ENCODE measurements at regions of chr2 and their contacts with region 1.

Region 1: DNA sequence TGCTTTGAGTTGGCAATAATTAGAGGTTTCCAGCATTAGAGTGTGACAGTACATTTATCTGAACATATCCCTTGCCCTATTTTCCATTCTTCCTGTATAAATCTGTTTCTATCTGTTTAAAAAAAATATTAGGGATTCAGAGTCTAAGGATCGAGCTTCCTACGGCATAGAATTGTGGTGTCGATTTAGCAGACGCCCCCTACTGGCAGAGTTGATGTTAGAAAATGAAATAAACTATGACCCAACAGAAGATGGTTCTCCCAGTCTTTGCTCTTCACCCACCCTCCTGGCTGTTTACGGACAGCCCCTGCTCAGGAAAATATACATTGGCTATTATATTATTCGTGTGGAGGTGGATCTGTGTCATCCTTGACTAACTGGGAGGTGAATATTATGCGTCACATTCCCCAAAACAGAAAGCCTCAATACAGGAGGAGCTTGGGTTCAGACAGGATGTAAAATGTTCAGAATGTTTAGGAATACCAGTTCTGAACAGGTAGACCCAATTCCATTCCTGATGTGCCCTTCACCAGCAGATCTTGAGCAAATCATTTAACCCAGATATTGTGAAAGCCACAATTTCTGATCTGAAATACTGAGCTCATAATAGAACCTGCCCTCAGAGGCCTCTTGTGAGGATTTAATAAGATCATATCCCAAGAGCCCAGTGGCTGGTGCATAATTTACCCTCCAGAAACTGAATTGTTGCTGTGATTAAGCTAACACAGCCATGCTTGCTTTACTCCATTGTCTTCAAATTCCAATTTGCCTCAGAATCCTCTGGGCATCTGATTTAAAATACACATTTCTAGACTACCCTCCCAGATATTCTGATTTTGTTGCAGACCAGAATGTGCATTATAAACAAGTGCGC is 10.8 kb upstream of the ERMN start:
- DNase-seq: peak; percentile 60
- ATAC-seq: no peak
- H3K4me3 Mint-ChIP-seq: peak overlapping the region; percentile 37
- H3K27ac Mint-ChIP-seq: no peak overlapping the region
- H3K4me1 Mint-ChIP-seq: peaks cover 70% of the 10 kb centered on the region
- H3K27me3 Mint-ChIP-seq: no peaks in the 10 kb centered on the region

Region 2: GRCh38 chr2:157320409-157320808 is 16.0 kb before region 1 on chr2:
- CTCF ChIA-PET with region 1: interaction called, 91 read pairs
- POLR2A ChIA-PET with region 1: no interaction called
- intact Hi-C with region 1: no loop called
- DNase-seq: no peak
- ATAC-seq: no peak
- H3K4me3 Mint-ChIP-seq: no peak overlapping the region
- H3K27ac Mint-ChIP-seq: no peak overlapping the region
- H3K4me1 Mint-ChIP-seq: peaks cover 21% of the 10 kb centered on the region
- H3K27me3 Mint-ChIP-seq: no peaks in the 10 kb centered on the region

Region 3: DNA sequence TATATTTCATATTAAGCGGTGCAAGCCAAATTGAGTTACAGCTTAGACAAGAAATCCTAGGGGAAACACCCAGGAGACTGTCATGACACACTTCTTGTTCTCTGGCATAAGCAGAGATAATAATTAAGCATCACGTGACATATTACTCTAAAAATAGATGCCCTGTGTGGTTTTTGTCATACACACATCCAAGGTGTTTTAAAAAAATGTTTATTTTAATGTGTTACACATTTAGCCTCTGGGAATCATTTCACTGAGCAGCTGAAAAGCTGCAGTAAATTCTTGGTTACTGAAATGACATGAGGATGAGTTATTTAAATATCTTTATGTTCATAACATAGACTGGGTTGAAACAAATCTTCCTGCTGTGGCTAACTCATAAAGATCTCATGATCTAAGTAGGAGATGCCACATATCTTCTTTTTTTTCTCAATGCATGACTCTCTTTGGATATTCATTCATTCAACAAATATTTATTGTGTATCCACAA is 27.3 kb after region 1 on chr2:
- CTCF ChIA-PET with region 1: interaction called, 12 read pairs
- POLR2A ChIA-PET with region 1: no interaction called
- intact Hi-C with region 1: no loop called
- DNase-seq: no peak
- ATAC-seq: peak; percentile 77
- H3K4me3 Mint-ChIP-seq: no peak overlapping the region
- H3K27ac Mint-ChIP-seq: peak overlapping the region; percentile 5
- H3K4me1 Mint-ChIP-seq: peaks cover 32% of the 10 kb centered on the region
- H3K27me3 Mint-ChIP-seq: no peaks in the 10 kb centered on the region

Region 4: GRCh38 chr2:157413326-157414035 is 77.1 kb after region 1 on chr2:
- CTCF ChIA-PET with region 1: interaction called, 20 read pairs
- POLR2A ChIA-PET with region 1: interaction called, 4 read pairs
- intact Hi-C with region 1: loop called in 1 of 2 experiments (anchors 2 kb)
- DNase-seq: peak; percentile 64
- ATAC-seq: peak; percentile 67
- H3K4me3 Mint-ChIP-seq: peak overlapping the region; percentile 63
- H3K27ac Mint-ChIP-seq: peak overlapping the region; percentile 100
- H3K4me1 Mint-ChIP-seq: peaks cover 89% of the 10 kb centered on the region
- H3K27me3 Mint-ChIP-seq: no peaks in the 10 kb centered on the region

Region 5: GRCh38 chr2:157480182-157480961 is 144.0 kb after region 1 on chr2:
- CTCF ChIA-PET with region 1: interaction called, 8 read pairs
- POLR2A ChIA-PET with region 1: interaction called, 5 read pairs
- intact Hi-C with region 1: loop called (anchors 2 to 5 kb)
- DNase-seq: peak; percentile 81
- ATAC-seq: peak; percentile 71
- H3K4me3 Mint-ChIP-seq: peak overlapping the region; percentile 64
- H3K27ac Mint-ChIP-seq: peak overlapping the region; percentile 95
- H3K4me1 Mint-ChIP-seq: peaks cover 86% of the 10 kb centered on the region
- H3K27me3 Mint-ChIP-seq: no peaks in the 10 kb centered on the region

Measured in activated CD4-positive, alpha-beta T cell treated with anti-CD3 and anti-CD28 coated beads for 36 hours (primary cell).